Mammary epithelial cell (primary cell): ENCODE measurements at regions of chr5 and their contacts with region 1.

Region 1: DNA sequence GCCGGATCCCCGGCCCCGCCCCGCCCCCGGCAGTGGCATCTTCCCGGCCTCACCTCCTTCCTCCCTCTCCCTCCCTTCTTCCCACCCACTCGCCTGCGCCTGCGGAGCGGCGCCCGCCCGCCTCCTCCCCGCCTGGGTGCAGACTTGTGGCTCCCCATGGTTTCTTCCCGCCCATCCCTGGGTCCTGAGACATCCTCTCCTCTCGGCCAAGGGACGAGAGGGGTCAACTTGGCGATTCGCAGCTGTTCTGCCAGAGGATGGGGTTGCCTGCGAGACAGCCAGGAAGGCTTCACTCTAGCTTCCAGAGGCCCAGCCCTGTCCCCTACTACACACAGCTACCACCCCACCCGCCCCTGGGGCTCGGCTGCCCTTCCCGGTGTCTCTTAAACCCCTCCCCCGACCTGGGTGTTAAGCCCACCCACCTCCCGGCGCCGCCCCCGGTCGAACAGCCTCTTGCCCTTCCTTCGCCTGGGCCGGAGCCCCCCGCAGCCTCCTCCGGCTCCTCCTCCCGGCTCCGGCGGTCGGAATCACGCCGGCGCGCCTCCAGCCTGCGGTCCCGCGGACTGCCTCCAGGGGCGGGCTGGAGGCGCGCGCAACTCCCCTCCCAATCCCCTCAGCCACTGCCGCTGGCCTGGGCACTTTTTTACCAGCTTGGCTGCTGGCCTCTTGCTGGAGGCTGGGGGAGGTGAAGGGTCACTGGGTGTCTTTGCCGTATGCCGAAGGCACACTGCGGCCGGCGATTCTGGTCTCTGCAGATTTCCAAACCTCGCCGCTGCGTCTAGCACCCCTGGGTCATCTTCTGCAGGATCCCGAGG is 1.9 kb downstream of the JADE2 start:
- DNase-seq: peak; percentile 91
- H3K4me3 ChIP-seq: peak overlapping the region; percentile 87 to 96 (median 91)
- H3K27ac ChIP-seq: peak overlapping the region; percentile 35
- H3K4me1 ChIP-seq: peaks cover 17% of the 10 kb centered on the region
- H3K27me3 ChIP-seq: no peaks in the 10 kb centered on the region
- CTCF ChIP-seq: peak; percentile 49 to 84

Region 2: GRCh38 chr5:134304311-134304710 is 223.0 kb before region 1 on chr5:
- CTCF ChIA-PET with region 1: no interaction called
- dilution Hi-C with region 1: no loop called
- in situ Hi-C with region 1: no loop called
- intact Hi-C with region 1: loop called (anchors 5 kb)
- DNase-seq: no peak
- H3K4me3 ChIP-seq: no peak overlapping the region
- H3K27ac ChIP-seq: no peak overlapping the region
- H3K4me1 ChIP-seq: no peaks in the 10 kb centered on the region
- H3K27me3 ChIP-seq: no peaks in the 10 kb centered on the region
- CTCF ChIP-seq: no peak

Region 3: GRCh38 chr5:134370871-134371833 is 156.2 kb before region 1 on chr5 and contains the start of gene UBE2B:
- CTCF ChIA-PET with region 1: no interaction called
- dilution Hi-C with region 1: no loop called
- in situ Hi-C with region 1: no loop called
- intact Hi-C with region 1: loop called (anchors 1 kb)
- DNase-seq: peak; percentile 99
- H3K4me3 ChIP-seq: peak within 1 kb of the TSS; percentile 94 to 97 (median 95)
- H3K27ac ChIP-seq: peak within 1 kb of the TSS; percentile 89
- H3K4me1 ChIP-seq: peaks cover 9% of the 10 kb centered on the region
- H3K27me3 ChIP-seq: no peaks in the 10 kb centered on the region
- CTCF ChIP-seq: no peak
- total RNA-seq, gene UBE2B: 37.2 to 83.3 TPM

Region 4: GRCh38 chr5:134411546-134412266 is 115.6 kb before region 1 on chr5 and contains the start of gene CDKN2AIPNL:
- CTCF ChIA-PET with region 1: interaction called, 17 read pairs
- dilution Hi-C with region 1: no loop called
- in situ Hi-C with region 1: loop called in 1 of 2 experiments (anchors 10 kb)
- intact Hi-C with region 1: loop called (anchors 1 kb)
- DNase-seq: peak; percentile 81
- H3K4me3 ChIP-seq: peak within 1 kb of the TSS; percentile 85 to 91 (median 87)
- H3K27ac ChIP-seq: peak within 1 kb of the TSS; percentile 28
- H3K4me1 ChIP-seq: peaks cover 22% of the 10 kb centered on the region
- H3K27me3 ChIP-seq: no peaks in the 10 kb centered on the region
- CTCF ChIP-seq: peak; percentile 35 to 77
- total RNA-seq, gene CDKN2AIPNL: 28.7 to 30.0 TPM

Region 5: GRCh38 chr5:134465816-134466240 is 61.5 kb before region 1 on chr5:
- CTCF ChIA-PET with region 1: interaction called, 7 read pairs
- dilution Hi-C with region 1: no loop called
- in situ Hi-C with region 1: no loop called
- intact Hi-C with region 1: loop called (anchors 1 kb)
- DNase-seq: peak; percentile 86
- H3K4me3 ChIP-seq: peak overlapping the region in 2 of 3 experiments; percentile 20 to 36
- H3K27ac ChIP-seq: peak overlapping the region; percentile 81
- H3K4me1 ChIP-seq: peaks cover 34% of the 10 kb centered on the region
- H3K27me3 ChIP-seq: no peaks in the 10 kb centered on the region
- CTCF ChIP-seq: no peak

Region 6: GRCh38 chr5:134503088-134503946 is 24.0 kb before region 1 on chr5:
- CTCF ChIA-PET with region 1: interaction called, 4 read pairs
- dilution Hi-C with region 1: no loop called
- in situ Hi-C with region 1: no loop called
- intact Hi-C with region 1: loop called (anchors 1 kb)
- DNase-seq: peak; percentile 99
- H3K4me3 ChIP-seq: no peak overlapping the region
- H3K27ac ChIP-seq: peak overlapping the region; percentile 65
- H3K4me1 ChIP-seq: peaks cover 44% of the 10 kb centered on the region
- H3K27me3 ChIP-seq: no peaks in the 10 kb centered on the region
- CTCF ChIP-seq: peak in 1 of 2 donors; percentile 3

Region 7: GRCh38 chr5:134577796-134578363 is 50.5 kb after region 1 on chr5:
- CTCF ChIA-PET with region 1: no interaction called
- dilution Hi-C with region 1: no loop called
- in situ Hi-C with region 1: no loop called
- intact Hi-C with region 1: loop called (anchors 1 kb)
- DNase-seq: peak; percentile 48
- H3K4me3 ChIP-seq: no peak overlapping the region
- H3K27ac ChIP-seq: no peak overlapping the region
- H3K4me1 ChIP-seq: peaks cover 10% of the 10 kb centered on the region
- H3K27me3 ChIP-seq: no peaks in the 10 kb centered on the region
- CTCF ChIP-seq: peak; percentile 84 to 87